Activated naive CD4-positive, alpha-beta T cell treated with anti-CD3 and anti-CD28 coated beads, Interleukin-2, amount 10 ng/mL, durations not matched to agents 7 days and 5 days (primary cell): ENCODE measurements at regions of chr7 and their contacts with region 1.

Region 1: DNA sequence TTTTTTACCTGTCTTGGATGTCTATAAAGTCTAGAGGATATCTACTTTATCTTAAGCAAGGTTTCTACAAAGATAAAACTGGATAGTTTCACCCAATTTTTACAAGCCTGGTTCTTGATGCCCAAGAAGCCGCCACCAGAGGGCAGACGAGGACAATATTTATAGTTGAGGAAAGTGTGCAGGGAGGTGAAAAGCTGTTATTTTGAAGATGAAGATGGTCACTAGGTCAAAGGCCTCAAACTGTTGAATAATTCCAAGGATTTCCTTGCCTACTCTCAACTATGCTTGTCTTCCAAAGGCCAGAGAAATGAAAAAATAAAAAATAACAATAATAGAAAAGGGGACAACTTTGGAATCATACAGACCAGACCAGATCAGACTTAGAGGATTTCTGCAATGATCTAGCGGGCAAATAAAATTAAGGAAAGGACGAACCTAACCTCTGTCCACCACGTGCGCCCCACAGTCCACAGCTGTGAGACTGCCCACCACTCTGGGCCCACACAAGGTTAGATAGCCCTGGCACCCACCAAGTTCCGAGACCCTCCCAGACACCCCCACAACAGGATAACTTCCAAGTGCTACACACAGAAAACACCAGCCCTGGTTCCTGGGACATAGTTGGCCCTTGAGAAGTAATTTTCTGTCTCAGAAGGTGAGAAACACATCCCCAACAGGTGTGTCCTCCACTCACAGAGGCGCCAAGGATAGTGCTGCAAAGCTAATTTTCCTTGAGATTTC is 2.8 kb downstream of the PKD1L1 start:
- DNase-seq: peak; percentile 84
- H3K4me3 Mint-ChIP-seq: no peak overlapping the region
- H3K27ac Mint-ChIP-seq: no peak overlapping the region
- H3K4me1 Mint-ChIP-seq: no peaks in the 10 kb centered on the region
- H3K27me3 Mint-ChIP-seq: peaks cover 3% of the 10 kb centered on the region

Region 2: GRCh38 chr7:47669061-47669891 is 276.2 kb before region 1 on chr7:
- CTCF ChIA-PET with region 1: no interaction called
- DNase-seq: no peak
- H3K4me3 Mint-ChIP-seq: no peak overlapping the region
- H3K27ac Mint-ChIP-seq: no peak overlapping the region
- H3K4me1 Mint-ChIP-seq: no peaks in the 10 kb centered on the region
- H3K27me3 Mint-ChIP-seq: no peaks in the 10 kb centered on the region

Region 3: DNA sequence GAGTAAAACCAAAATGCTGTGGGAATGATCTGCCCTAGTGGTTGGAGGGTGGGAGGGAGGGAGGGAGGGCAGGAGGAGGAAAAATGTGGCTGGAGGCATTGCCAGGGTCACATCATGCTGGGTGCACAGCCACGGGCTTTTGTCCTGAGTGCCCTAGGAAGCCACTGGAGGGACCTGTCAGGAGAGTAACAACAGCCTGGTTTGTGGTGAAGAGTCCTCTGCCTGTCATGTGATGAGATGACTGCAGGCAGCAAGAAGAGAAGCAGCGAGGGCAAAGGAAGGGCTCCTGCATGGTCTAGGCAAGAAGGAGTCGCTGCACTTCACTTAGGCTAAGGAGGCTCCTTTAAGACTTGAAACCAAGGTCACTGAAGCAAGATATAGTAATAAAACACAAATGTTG is 62.8 kb before region 1 on chr7:
- CTCF ChIA-PET with region 1: no interaction called
- DNase-seq: no peak
- H3K4me3 Mint-ChIP-seq: no peak overlapping the region
- H3K27ac Mint-ChIP-seq: no peak overlapping the region
- H3K4me1 Mint-ChIP-seq: no peaks in the 10 kb centered on the region
- H3K27me3 Mint-ChIP-seq: no peaks in the 10 kb centered on the region

Region 4: GRCh38 chr7:47968847-47969774 is 23.7 kb after region 1 on chr7:
- CTCF ChIA-PET with region 1: interaction called, 12 read pairs
- DNase-seq: peak; percentile 70
- H3K4me3 Mint-ChIP-seq: no peak overlapping the region
- H3K27ac Mint-ChIP-seq: no peak overlapping the region
- H3K4me1 Mint-ChIP-seq: peaks cover 6% of the 10 kb centered on the region
- H3K27me3 Mint-ChIP-seq: no peaks in the 10 kb centered on the region

Region 5: GRCh38 chr7:48109848-48110663 is 164.6 kb after region 1 on chr7:
- CTCF ChIA-PET with region 1: interaction called, 75 read pairs
- DNase-seq: peak; percentile 94
- H3K4me3 Mint-ChIP-seq: no peak overlapping the region
- H3K27ac Mint-ChIP-seq: peak overlapping the region; percentile 74
- H3K4me1 Mint-ChIP-seq: peaks cover 21% of the 10 kb centered on the region
- H3K27me3 Mint-ChIP-seq: no peaks in the 10 kb centered on the region

Region 6: DNA sequence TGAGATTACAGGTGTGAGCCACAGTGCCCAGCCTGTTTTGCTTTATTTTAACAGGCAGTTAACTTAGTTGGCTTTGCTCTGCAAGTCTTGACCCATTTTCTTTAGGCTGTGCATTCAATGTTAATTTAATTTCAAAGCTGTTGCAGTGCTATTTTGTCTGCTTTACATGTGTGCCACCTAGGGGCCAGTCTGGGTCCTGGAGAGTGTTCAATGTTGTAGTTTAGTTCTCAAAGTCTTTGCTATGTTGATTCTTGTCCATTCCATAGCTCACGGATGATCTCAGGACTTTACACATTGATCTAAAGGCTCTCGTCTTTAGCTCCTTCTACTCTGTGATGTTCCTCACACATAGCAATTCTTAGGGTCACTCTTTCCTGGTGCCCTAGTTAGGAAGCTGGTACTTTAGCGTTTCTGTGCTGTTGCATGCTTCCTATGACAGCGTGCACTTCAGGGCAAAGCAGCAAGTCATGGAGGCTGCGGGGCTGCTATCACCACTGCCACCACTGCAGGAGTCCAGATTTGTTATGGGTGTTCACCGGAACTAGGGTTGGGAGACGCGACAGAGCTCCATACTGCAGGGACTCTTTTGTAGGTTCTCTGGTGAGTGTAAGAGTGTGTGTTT is 209.5 kb after region 1 on chr7:
- CTCF ChIA-PET with region 1: interaction called, 62 read pairs
- DNase-seq: peak; percentile 68
- H3K4me3 Mint-ChIP-seq: no peak overlapping the region
- H3K27ac Mint-ChIP-seq: no peak overlapping the region
- H3K4me1 Mint-ChIP-seq: no peaks in the 10 kb centered on the region
- H3K27me3 Mint-ChIP-seq: peaks cover 26% of the 10 kb centered on the region